MCF 10A (cell line): ENCODE measurements at regions of chr21 and their contacts with region 1.

Region 1: GRCh38 chr21:15483138-15483780 is 246.5 kb upstream of the USP25 start:
- DNase-seq: peak; percentile 88
- H3K4me3 Mint-ChIP-seq: no peak overlapping the region
- H3K27ac Mint-ChIP-seq: no peak overlapping the region
- H3K4me1 Mint-ChIP-seq: no peaks in the 10 kb centered on the region
- H3K27me3 Mint-ChIP-seq: no peaks in the 10 kb centered on the region
- CTCF ChIP-seq: peak; percentile 96

Region 2: DNA sequence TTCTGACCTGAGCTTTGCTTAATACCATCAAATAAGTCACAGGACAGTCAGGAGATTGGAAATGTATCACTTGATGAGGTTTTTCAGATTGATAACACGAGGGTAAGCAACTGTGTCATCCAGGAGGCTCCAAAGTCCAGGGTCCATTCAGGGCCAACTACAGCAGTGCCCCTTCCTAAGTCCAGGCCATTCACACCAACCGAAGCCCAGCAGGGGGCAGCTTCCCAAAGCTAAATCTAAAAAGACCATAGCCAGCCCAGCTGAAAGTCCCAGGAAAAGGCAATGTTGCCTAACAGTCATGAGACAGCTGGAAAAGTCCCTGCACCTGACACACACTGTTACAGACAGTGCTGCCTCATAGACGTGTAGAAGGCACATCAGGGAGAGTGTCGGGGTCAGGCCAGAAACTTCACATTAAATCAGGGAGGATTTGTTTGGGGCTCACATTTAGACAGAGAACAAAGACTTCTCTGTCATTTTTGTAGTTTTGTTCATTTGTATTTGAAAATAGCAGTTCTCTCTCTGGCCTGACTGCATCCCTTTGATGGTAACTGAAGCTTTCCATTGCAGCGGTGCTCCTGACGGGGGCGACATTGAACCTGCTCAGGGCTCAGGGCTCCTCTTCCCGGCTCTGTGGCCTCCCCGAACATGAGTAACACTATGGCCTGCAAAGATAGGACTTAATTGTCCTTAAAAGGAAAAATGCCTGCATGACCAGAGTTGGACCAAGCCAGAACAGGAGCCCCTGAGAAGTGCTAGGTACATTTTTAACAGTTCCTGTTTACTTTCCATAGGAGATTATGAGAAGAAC is 618.8 kb before region 1 on chr21:
- CTCF ChIA-PET with region 1: interaction called, 3 read pairs
- POLR2A ChIA-PET with region 1: no interaction called
- intact Hi-C with region 1: loop called (anchors 1 kb)
- DNase-seq: peak; percentile 78
- H3K4me3 Mint-ChIP-seq: no peak overlapping the region
- H3K27ac Mint-ChIP-seq: peak overlapping the region; percentile 29
- H3K4me1 Mint-ChIP-seq: peaks cover 30% of the 10 kb centered on the region
- H3K27me3 Mint-ChIP-seq: no peaks in the 10 kb centered on the region
- CTCF ChIP-seq: peak; percentile 45

Region 3: GRCh38 chr21:15159382-15160020 is 323.8 kb before region 1 on chr21:
- CTCF ChIA-PET with region 1: interaction called, 3 read pairs
- POLR2A ChIA-PET with region 1: no interaction called
- intact Hi-C with region 1: loop called (anchors 10 kb)
- DNase-seq: no peak
- H3K4me3 Mint-ChIP-seq: no peak overlapping the region
- H3K27ac Mint-ChIP-seq: no peak overlapping the region
- H3K4me1 Mint-ChIP-seq: peaks cover 5% of the 10 kb centered on the region
- H3K27me3 Mint-ChIP-seq: no peaks in the 10 kb centered on the region
- CTCF ChIP-seq: no peak

Region 4: GRCh38 chr21:15592271-15592860 is 109.1 kb after region 1 on chr21:
- CTCF ChIA-PET with region 1: no interaction called
- POLR2A ChIA-PET with region 1: no interaction called
- intact Hi-C with region 1: loop called (anchors 1 kb)
- DNase-seq: peak; percentile 60
- H3K4me3 Mint-ChIP-seq: no peak overlapping the region
- H3K27ac Mint-ChIP-seq: no peak overlapping the region
- H3K4me1 Mint-ChIP-seq: no peaks in the 10 kb centered on the region
- H3K27me3 Mint-ChIP-seq: no peaks in the 10 kb centered on the region
- CTCF ChIP-seq: peak; percentile 57